ENCODE measurements at regions of chr1 and their contacts with region 1.

Region 1: DNA sequence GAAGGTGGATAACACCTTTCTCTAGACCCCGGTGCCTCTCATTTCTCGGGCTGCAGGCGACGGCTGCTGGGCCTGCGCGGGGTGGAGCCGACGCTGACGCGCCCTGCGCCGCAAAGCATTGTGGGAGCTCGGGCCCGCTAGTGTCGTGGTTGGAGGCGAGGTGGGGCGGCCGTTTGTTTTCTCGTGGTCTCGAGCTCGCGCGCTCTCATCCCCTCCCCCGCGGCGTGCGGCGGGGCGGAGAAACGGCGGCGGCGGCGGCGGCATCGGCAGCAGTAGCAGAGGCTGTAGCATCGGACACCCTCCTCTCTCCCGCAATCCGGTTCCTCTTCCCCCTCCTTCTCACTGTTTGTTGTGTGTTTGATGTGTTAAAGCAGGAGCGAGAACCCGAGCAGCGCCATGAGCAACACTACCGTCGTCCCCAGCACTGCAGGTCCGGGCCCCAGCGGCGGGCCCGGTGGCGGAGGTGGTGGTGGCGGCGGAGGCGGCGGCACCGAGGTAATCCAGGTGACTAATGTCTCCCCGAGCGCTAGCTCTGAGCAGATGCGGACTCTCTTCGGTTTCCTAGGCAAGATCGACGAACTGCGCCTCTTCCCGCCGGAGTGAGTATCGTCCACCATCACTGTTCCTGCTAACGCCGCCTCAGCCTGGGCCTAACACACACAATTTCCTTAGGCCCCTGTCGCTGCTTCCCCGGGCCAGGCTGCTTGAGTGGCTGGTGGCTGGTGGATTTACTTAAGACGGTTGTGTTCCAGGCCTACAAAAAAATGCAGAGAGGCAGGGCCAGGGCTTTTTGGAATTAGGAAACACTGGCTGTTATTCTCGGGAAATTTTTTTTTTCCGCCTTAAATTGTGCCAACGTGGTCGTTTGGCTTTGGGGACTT is at the start of gene SRSF11:
- DNase-seq: peak; percentile 92 to 93
- H3K4me3 ChIP-seq: peak within 1 kb of the TSS; percentile 73
- H3K4me3 Mint-ChIP-seq: peak within 1 kb of the TSS; percentile 77
- H3K27ac Mint-ChIP-seq: peak within 1 kb of the TSS; percentile 97
- H3K4me1 ChIP-seq: peaks cover 5% of the 10 kb centered on the region; the same call in 1 of the 2 replicates
- H3K4me1 Mint-ChIP-seq: no peaks in the 10 kb centered on the region
- H3K27me3 ChIP-seq: no peaks in the 10 kb centered on the region
- H3K27me3 Mint-ChIP-seq: no peaks in the 10 kb centered on the region
- CTCF ChIP-seq: no peak
- total RNA-seq, gene SRSF11: 116 and 119 TPM in 2 replicates

Region 2: DNA sequence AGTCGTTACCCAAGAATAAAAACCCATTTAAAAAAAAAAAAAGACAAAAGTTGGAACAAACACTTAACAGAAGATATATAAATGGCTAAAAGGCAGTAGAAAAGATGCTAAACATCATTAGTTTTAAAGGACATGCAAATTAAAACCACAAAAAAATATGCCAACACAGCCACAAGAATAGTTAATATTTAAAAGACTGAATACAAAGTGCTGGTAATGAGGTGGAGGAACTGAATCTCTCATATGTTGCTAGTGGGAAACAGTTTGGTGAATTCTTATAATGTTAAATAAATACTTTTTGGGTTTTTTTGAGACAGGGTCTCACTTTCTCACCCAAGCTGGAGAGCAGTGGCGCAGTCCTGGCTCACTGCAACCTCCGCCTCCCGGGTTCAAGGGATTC is 26.1 kb before region 1 on chr1:
- CTCF ChIA-PET with region 1: no interaction called
- POLR2A ChIA-PET with region 1: interaction called, 10 read pairs
- intact Hi-C with region 1: no loop called
- DNase-seq: no peak
- H3K4me3 ChIP-seq: no peak overlapping the region
- H3K4me3 Mint-ChIP-seq: no peak overlapping the region
- H3K27ac Mint-ChIP-seq: no peak overlapping the region
- H3K4me1 ChIP-seq: no peaks in the 10 kb centered on the region
- H3K4me1 Mint-ChIP-seq: no peaks in the 10 kb centered on the region
- H3K27me3 ChIP-seq: no peaks in the 10 kb centered on the region
- H3K27me3 Mint-ChIP-seq: no peaks in the 10 kb centered on the region
- CTCF ChIP-seq: no peak

Region 3: GRCh38 chr1:70234733-70235132 is 13.3 kb after region 1 on chr1:
- CTCF ChIA-PET with region 1: no interaction called
- POLR2A ChIA-PET with region 1: no interaction called
- intact Hi-C with region 1: no loop called
- DNase-seq: no peak
- H3K4me3 ChIP-seq: no peak overlapping the region
- H3K4me3 Mint-ChIP-seq: no peak overlapping the region
- H3K27ac Mint-ChIP-seq: no peak overlapping the region
- H3K4me1 ChIP-seq: no peaks in the 10 kb centered on the region
- H3K4me1 Mint-ChIP-seq: no peaks in the 10 kb centered on the region
- H3K27me3 ChIP-seq: no peaks in the 10 kb centered on the region
- H3K27me3 Mint-ChIP-seq: no peaks in the 10 kb centered on the region
- CTCF ChIP-seq: no peak

Region 4: DNA sequence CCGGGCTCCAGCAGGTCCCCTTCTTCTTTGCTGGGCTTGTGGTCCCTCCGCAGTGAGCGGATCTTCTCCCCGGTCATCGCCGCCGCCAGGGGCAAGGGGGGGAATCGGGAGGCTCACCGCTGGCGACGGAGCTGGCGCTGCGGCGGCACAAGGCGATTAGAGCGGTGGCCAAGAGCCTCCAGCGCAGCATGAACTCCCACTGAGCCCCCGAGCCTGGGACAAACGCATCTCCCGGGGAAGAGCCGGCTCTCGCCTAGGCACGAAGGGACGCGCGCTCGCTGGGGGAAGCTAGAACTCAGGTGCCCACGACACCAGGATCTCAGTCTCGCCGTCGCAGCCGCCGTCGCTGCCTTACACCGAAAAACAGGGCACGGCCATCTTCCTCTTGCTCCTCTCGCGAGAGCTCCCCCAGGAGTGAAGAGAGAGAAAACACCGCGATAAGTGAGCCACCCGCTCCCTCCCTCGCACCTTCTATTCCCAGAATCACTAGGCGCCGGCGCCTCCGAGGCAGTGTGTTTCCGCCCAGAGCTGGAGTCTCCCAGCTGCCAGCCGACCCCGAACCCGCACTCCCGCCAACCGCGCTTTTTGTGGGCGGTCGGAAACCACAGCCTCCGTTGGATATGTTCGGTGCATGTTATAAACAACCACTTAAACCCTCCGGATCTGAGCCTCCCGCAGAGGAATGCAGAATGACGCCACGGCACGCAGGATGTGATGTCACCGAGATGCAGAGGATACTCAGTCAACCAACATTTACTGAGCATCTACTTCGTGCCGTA is 133.0 kb after region 1 on chr1 and contains the start of gene ANKRD13C:
- CTCF ChIA-PET with region 1: no interaction called
- POLR2A ChIA-PET with region 1: interaction called, 5 read pairs
- intact Hi-C with region 1: loop called (anchors 5 kb)
- DNase-seq: peak; percentile 90 to 93
- H3K4me3 ChIP-seq: peak within 1 kb of the TSS; percentile 94
- H3K4me3 Mint-ChIP-seq: peak within 1 kb of the TSS; percentile 84
- H3K27ac Mint-ChIP-seq: peak within 1 kb of the TSS; percentile 94
- H3K4me1 ChIP-seq: 0 out of 2 replicates have a peak, but pooled peaks cover 8% of the 10 kb centered on the region
- H3K4me1 Mint-ChIP-seq: peaks cover 14% of the 10 kb centered on the region
- H3K27me3 ChIP-seq: no peaks in the 10 kb centered on the region
- H3K27me3 Mint-ChIP-seq: no peaks in the 10 kb centered on the region
- CTCF ChIP-seq: no peak
- total RNA-seq, gene ANKRD13C: 13.1 and 14.4 TPM in 2 replicates

Measured in Caco-2 (cell line).